ENCODE measurements at regions of chr4 and their contacts with region 1.

Region 1: GRCh38 chr4:172892300-172892699 is 276.3 kb upstream of the GALNT7 start:
- DNase-seq: peak; percentile 17 to 59
- H3K4me3 ChIP-seq: no peak overlapping the region
- H3K27ac ChIP-seq: no peak overlapping the region
- H3K4me1 ChIP-seq: no peaks in the 10 kb centered on the region
- H3K27me3 ChIP-seq: no peaks in the 10 kb centered on the region
- CTCF ChIP-seq: peak in 2 of 3 experiments; percentile 75 to 78; a peak in 3 of 4 replicates
- EP300 ChIP-seq: no peak
- POLR2A ChIP-seq: no peak
- RAD21 ChIP-seq: peak; percentile 70 to 77

Region 2: GRCh38 chr4:172881645-172882044 is 10.7 kb before region 1 on chr4:
- CTCF ChIA-PET with region 1: interaction called, 11 read pairs
- POLR2A ChIA-PET with region 1: no interaction called
- DNase-seq: no peak
- H3K4me3 ChIP-seq: no peak overlapping the region
- H3K27ac ChIP-seq: no peak overlapping the region
- H3K4me1 ChIP-seq: no peaks in the 10 kb centered on the region
- H3K27me3 ChIP-seq: no peaks in the 10 kb centered on the region
- CTCF ChIP-seq: no peak
- EP300 ChIP-seq: no peak
- POLR2A ChIP-seq: no peak
- RAD21 ChIP-seq: no peak

Region 3: GRCh38 chr4:172938072-172938829 is 46.0 kb after region 1 on chr4:
- CTCF ChIA-PET with region 1: interaction called, 12 read pairs
- POLR2A ChIA-PET with region 1: no interaction called
- DNase-seq: no peak
- H3K4me3 ChIP-seq: no peak overlapping the region
- H3K27ac ChIP-seq: no peak overlapping the region
- H3K4me1 ChIP-seq: no peaks in the 10 kb centered on the region
- H3K27me3 ChIP-seq: no peaks in the 10 kb centered on the region
- CTCF ChIP-seq: no peak
- EP300 ChIP-seq: no peak
- POLR2A ChIP-seq: no peak
- RAD21 ChIP-seq: no peak